CD8-positive, alpha-beta T cell (primary cell): ENCODE measurements at regions of chr3 and their contacts with region 1.

Region 1: DNA sequence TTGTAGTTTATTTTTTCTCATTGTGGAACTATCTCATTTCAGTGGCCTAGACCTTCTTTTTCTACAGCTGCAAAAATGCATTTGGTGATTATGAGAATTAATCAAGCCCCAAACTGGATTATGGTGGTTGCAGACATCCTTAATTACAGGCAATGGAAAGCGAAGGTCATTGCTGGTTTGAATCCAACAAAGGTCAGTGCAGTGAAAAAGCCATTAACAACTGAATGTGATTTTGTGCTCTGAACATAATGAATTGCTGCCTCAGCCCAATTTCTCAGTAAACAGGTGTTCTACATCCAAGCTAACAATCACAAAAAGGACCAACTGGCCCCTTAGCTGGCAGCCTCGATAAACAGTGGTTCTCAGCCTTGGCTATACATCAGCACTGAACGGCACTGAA is 260.1 kb upstream of the DPPA4 start:
- DNase-seq: no peak
- ATAC-seq: no peak
- H3K4me3 ChIP-seq: no peak overlapping the region
- H3K4me3 Mint-ChIP-seq: no peak overlapping the region
- H3K27ac ChIP-seq: no peak overlapping the region
- H3K27ac Mint-ChIP-seq: no peak overlapping the region
- H3K4me1 ChIP-seq: no peaks in the 10 kb centered on the region
- H3K4me1 Mint-ChIP-seq: no peaks in the 10 kb centered on the region
- H3K27me3 ChIP-seq: no peaks in the 10 kb centered on the region
- H3K27me3 Mint-ChIP-seq: peaks cover 2% of the 10 kb centered on the region
- CTCF ChIP-seq: no peak

Region 2: DNA sequence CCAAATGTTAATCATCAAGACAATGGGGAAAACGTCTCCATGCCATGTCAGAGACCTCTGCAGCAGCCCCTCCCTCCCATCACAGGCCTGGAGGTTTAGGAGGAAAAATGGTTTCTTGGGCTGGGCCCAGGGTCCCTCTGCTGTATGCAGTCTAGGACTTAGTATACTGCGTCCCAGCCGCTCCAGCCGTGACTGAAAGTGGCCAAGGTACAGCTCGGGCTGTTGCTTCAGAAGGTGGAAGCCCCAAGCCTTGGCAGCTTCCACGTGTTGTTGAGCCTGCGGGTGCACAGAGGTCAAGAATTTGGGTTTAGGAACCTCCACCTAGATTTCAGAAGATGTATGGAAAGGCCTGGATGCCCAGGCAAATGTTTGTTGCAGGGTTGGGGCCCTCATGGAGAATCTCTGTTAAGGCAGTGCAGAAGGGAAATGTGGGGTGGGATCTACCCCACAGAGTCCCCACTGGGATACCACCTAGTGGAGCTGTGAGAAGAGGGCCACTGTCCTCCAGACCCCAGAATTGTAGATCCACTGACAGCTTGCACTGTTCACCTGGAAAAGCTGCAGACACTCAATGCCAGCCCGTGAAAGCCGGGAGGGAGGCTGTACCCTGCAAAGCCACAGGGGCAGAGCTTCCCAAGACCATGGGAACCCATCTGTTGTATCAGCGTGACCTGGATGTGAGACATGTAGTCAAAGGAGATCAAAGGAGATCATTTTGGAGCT is 1499.2 kb after region 1 on chr3:
- CTCF ChIA-PET with region 1: no interaction called
- POLR2A ChIA-PET with region 1: no interaction called
- intact Hi-C with region 1: loop called in 1 of 2 experiments (anchors 5 kb)
- DNase-seq: no peak
- ATAC-seq: no peak
- H3K4me3 ChIP-seq: no peak overlapping the region
- H3K4me3 Mint-ChIP-seq: no peak overlapping the region
- H3K27ac ChIP-seq: no peak overlapping the region
- H3K27ac Mint-ChIP-seq: no peak overlapping the region
- H3K4me1 ChIP-seq: no peaks in the 10 kb centered on the region
- H3K4me1 Mint-ChIP-seq: no peaks in the 10 kb centered on the region
- H3K27me3 ChIP-seq: no peaks in the 10 kb centered on the region
- H3K27me3 Mint-ChIP-seq: no peaks in the 10 kb centered on the region
- CTCF ChIP-seq: no peak